GM12878 (cell line): ENCODE measurements at regions of chr19 and their contacts with region 1.

Region 1: DNA sequence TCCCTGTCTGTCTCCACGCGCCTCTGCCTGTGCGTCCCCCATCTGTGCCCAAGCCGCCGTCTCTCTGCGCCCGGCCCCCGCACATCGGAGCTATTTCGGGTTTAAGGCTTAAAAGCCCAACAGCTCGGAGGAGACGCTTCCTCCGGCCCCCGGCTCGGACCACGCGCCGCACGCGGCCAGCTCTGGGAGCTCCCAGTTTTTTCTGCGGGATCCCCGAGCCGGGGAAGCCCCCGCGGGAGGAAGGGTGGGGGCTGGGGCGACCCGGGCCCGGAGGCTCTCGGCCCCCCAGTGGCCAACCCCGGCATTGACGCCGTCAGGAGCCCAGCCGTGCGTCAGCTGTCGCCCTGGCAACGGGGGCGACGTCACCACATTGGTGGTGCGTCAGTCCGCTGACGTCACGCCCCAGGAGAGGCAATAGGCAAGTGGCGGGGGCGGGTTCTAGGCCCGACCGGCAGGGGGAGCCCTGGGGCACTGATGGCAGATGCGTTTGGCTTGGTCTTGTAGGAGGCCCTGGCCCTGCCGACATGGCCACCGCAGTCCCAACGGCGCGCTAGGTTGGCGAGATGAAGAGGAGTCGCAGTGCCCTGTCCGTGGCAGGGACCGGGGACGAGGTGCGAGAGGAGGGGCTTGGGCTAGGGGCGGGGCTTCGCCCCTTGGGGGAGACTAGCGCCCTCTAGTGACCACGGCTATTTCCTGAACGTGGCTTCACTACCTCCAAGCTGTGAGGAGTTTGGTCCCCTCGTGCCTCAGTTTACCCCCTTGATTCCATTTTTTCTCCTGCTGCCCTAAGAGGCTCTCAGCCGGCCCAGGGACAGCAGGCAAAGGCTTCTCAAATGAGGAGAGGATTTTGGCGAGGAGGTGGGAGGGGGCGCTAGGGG is 3.7 kb upstream of the PDE4A start:
- DNase-seq: peak; percentile 60
- ATAC-seq: peak; percentile 53
- H3K4me3 ChIP-seq: peak overlapping the region; percentile 71
- H3K27ac ChIP-seq: peak overlapping the region; percentile 72
- H3K4me1 ChIP-seq: peaks cover 51% of the 10 kb centered on the region
- H3K27me3 ChIP-seq: peaks cover 0 to 16% of the 10 kb centered on the region in 2 experiments; a peak in 3 of 4 replicates
- CTCF ChIP-seq: peak; percentile 80 to 86 (median 81)
- EP300 ChIP-seq: peak in 1 of 2 experiments; percentile 74; a peak in 2 of 4 replicates
- POLR2A ChIP-seq: no peak; the same call in 1 of the 2 replicates
- RAD21 ChIP-seq: peak; percentile 41; the same call in 1 of the 2 replicates

Region 2: DNA sequence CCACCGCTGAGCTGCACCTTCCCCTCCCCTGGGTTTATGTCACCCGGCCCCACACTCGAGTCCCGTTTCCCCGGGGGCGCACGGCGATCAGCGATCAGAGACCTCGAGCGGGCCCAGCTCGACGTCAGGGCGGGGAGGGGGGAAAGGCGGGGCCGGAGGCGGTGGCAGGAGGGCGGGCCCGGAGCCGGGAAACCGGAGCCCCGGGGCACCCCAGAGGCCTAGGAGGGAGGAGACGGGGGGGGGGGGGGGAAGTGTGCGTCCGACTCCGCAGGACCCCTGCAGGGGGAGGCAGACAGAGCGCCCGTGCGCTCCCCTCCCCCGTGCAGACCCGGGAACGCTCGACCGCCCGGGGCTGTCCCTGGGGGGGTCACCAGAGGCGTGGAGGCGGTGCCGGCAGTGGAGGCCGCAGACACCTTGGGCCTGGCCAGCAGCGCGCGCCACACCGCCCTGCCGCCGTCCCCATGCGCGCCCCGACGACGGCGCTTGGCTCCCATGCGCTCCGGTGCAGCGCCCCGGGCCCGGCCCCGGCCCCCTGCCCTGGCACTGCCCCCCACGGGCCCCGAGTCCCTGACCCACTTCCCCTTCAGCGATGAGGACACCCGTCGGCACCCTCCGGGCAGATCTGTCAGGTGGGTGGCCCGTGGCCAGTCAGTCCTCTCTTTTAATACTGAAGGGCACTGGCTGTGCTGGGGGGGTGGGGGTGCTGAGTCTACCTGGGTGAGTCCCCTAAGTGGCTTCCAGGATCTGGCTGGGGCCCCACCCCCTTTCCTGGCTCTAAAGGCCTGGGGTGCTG is 15.5 kb after region 1 on chr19:
- CTCF ChIA-PET with region 1: interaction called, 1,053 read pairs
- POLR2A ChIA-PET with region 1: interaction called, 37 read pairs
- RAD21 ChIA-PET with region 1: interaction called, 28 read pairs
- SMC1A ChIA-PET with region 1: interaction called, 364 read pairs
- in situ Hi-C with region 1: no loop called
- intact Hi-C with region 1: no loop called
- DNase-seq: no peak
- ATAC-seq: peak; percentile 66
- H3K4me3 ChIP-seq: peak overlapping the region; percentile 54; the same call in 1 of the 2 replicates
- H3K27ac ChIP-seq: peak overlapping the region; percentile 56; the same call in 1 of the 2 replicates
- H3K4me1 ChIP-seq: peaks cover 41% of the 10 kb centered on the region
- H3K27me3 ChIP-seq: peaks cover 0 to 4% of the 10 kb centered on the region in 2 experiments; a peak in 1 of 4 replicates
- CTCF ChIP-seq: no peak
- EP300 ChIP-seq: no peak
- POLR2A ChIP-seq: no peak
- RAD21 ChIP-seq: no peak

Region 3: GRCh38 chr19:10517760-10518443 is 101.3 kb after region 1 on chr19:
- CTCF ChIA-PET with region 1: no interaction called
- POLR2A ChIA-PET with region 1: no interaction called
- RAD21 ChIA-PET with region 1: no interaction called
- SMC1A ChIA-PET with region 1: no interaction called
- in situ Hi-C with region 1: no loop called
- intact Hi-C with region 1: no loop called
- DNase-seq: no peak
- ATAC-seq: no peak; the same call in 1 of the 3 replicates
- H3K4me3 ChIP-seq: no peak overlapping the region
- H3K27ac ChIP-seq: no peak overlapping the region
- H3K4me1 ChIP-seq: peaks cover 11% of the 10 kb centered on the region
- H3K27me3 ChIP-seq: peaks cover 12 to 26% of the 10 kb centered on the region in 2 experiments
- CTCF ChIP-seq: no peak
- EP300 ChIP-seq: no peak
- POLR2A ChIP-seq: no peak
- RAD21 ChIP-seq: no peak

Region 4: GRCh38 chr19:10602330-10603083 is 185.9 kb after region 1 on chr19:
- CTCF ChIA-PET with region 1: no interaction called
- POLR2A ChIA-PET with region 1: interaction called, 10 read pairs
- RAD21 ChIA-PET with region 1: no interaction called
- SMC1A ChIA-PET with region 1: no interaction called
- in situ Hi-C with region 1: no loop called
- intact Hi-C with region 1: no loop called
- DNase-seq: no peak
- ATAC-seq: peak; percentile 81
- H3K4me3 ChIP-seq: peak overlapping the region; percentile 98
- H3K27ac ChIP-seq: peak overlapping the region; percentile 98
- H3K4me1 ChIP-seq: peaks cover 20% of the 10 kb centered on the region
- H3K27me3 ChIP-seq: no peaks in the 10 kb centered on the region
- CTCF ChIP-seq: no peak
- EP300 ChIP-seq: no peak
- POLR2A ChIP-seq: peak; percentile 73
- RAD21 ChIP-seq: no peak

Region 5: GRCh38 chr19:10653715-10654492 is 237.3 kb after region 1 on chr19 and contains the start of gene ILF3:
- CTCF ChIA-PET with region 1: no interaction called
- POLR2A ChIA-PET with region 1: no interaction called
- RAD21 ChIA-PET with region 1: no interaction called
- SMC1A ChIA-PET with region 1: no interaction called
- in situ Hi-C with region 1: no loop called
- intact Hi-C with region 1: loop called (anchors 10 kb)
- DNase-seq: peak; percentile 100
- ATAC-seq: peak; percentile 83
- H3K4me3 ChIP-seq: peak within 1 kb of the TSS; percentile 91
- H3K27ac ChIP-seq: peak within 1 kb of the TSS; percentile 99
- H3K4me1 ChIP-seq: peaks cover 6% of the 10 kb centered on the region
- H3K27me3 ChIP-seq: no peaks in the 10 kb centered on the region
- CTCF ChIP-seq: no peak
- EP300 ChIP-seq: peak; percentile 52 to 54
- POLR2A ChIP-seq: peak; percentile 89
- RAD21 ChIP-seq: no peak
- polyA plus RNA-seq, gene ILF3: 28.1 to 38.1 TPM